H1 (cell line): ENCODE measurements at regions of chr2 and their contacts with region 1.

Region 1: GRCh38 chr2:33033606-33034081 is 86.9 kb downstream of the LTBP1 start:
- DNase-seq: no peak
- H3K4me3 ChIP-seq: no peak overlapping the region
- H3K27ac ChIP-seq: no peak overlapping the region
- H3K4me1 ChIP-seq: no peaks in the 10 kb centered on the region
- H3K27me3 ChIP-seq: no peaks in the 10 kb centered on the region
- CTCF ChIP-seq: peak in 1 of 3 experiments; percentile 25; a peak in 1 of 4 replicates
- EP300 ChIP-seq: no peak
- POLR2A ChIP-seq: no peak
- RAD21 ChIP-seq: peak; percentile 45 to 47

Region 2: GRCh38 chr2:32772638-32773447 is 260.8 kb before region 1 on chr2:
- CTCF ChIA-PET with region 1: interaction called, 10 read pairs
- POLR2A ChIA-PET with region 1: no interaction called
- DNase-seq: peak; percentile 5 to 48
- H3K4me3 ChIP-seq: no peak overlapping the region
- H3K27ac ChIP-seq: no peak overlapping the region
- H3K4me1 ChIP-seq: peaks cover 0 to 9% (median 3%) of the 10 kb centered on the region in 4 experiments; a peak in 2 of 7 replicates
- H3K27me3 ChIP-seq: no peaks in the 10 kb centered on the region
- CTCF ChIP-seq: peak in 2 of 3 experiments; percentile 66; a peak in 3 of 4 replicates
- EP300 ChIP-seq: no peak
- POLR2A ChIP-seq: no peak
- RAD21 ChIP-seq: peak; percentile 97

Region 3: DNA sequence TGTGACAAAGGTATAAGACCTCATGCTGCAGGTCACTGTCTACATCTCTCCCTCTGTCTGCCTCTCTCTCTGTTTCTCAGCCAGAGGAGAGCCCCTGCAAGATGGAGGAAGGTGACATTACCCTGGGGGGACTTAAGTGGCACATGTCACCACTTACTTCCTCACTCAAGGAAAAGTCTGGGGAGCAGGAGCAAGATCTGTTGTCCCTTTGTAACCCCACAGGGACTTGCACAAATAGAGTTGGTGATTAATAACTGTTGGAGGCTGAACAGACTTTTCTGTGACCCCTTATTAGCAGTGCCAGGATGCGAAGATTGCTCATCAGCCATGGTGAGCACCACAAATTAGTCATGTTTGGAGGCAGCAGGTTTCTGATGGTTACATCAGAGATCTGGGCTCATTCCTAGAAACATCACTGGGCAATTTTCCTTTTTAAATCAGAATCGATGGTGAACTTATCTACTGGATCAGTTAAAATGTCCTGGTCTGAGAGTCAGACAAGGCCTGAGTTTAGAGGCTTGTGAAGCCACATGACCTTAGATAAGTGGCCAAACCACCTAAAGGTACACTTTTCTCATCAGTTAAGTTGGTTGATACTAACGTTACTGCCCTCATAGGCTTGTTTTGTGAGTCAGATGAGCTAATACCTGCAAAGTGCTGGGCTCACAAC is 168.1 kb before region 1 on chr2:
- CTCF ChIA-PET with region 1: no interaction called
- POLR2A ChIA-PET with region 1: no interaction called
- DNase-seq: no peak
- H3K4me3 ChIP-seq: no peak overlapping the region
- H3K27ac ChIP-seq: no peak overlapping the region
- H3K4me1 ChIP-seq: no peaks in the 10 kb centered on the region
- H3K27me3 ChIP-seq: no peaks in the 10 kb centered on the region
- CTCF ChIP-seq: no peak
- EP300 ChIP-seq: no peak
- POLR2A ChIP-seq: no peak
- RAD21 ChIP-seq: no peak

Region 4: DNA sequence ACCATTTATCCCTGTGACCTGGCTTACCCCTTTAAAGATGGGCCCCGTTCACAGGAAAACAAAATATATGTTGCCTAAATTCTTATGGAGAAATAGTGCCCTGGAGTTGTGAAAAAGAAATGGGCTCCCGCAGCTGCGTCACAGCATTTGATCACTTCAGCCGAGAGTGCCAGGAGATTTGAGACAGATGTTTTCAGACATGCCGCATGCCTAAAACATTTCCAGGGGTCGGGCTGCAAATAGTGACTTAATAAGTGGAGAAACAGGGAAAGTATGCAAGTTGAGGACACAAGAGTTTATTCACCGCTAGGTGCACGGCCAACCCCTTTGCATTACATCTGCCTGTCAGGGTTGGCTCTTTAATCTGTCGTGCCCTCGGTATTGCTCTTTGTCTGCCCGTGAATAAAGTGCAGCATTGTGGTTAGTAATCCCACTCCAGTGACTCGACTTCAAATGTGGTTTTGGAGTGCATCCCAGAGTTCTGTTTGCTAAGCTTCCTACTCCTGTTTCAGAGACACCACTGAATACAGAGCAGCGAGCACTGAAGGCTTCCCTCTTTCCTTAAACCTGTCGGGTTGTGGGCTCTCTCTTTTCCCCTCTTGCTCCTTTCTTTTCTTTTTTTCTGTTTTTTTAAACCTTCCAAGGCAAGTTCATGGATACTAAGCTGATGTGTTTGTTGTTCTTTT is 100.6 kb after region 1 on chr2:
- CTCF ChIA-PET with region 1: no interaction called
- POLR2A ChIA-PET with region 1: no interaction called
- DNase-seq: no peak
- H3K4me3 ChIP-seq: no peak overlapping the region
- H3K27ac ChIP-seq: no peak overlapping the region
- H3K4me1 ChIP-seq: peaks cover 0 to 7% (median 4%) of the 10 kb centered on the region in 4 experiments; a peak in 2 of 7 replicates
- H3K27me3 ChIP-seq: no peaks in the 10 kb centered on the region
- CTCF ChIP-seq: no peak
- EP300 ChIP-seq: no peak
- POLR2A ChIP-seq: no peak
- RAD21 ChIP-seq: no peak

Region 5: GRCh38 chr2:33765122-33765521 is 731.5 kb after region 1 on chr2:
- CTCF ChIA-PET with region 1: no interaction called
- POLR2A ChIA-PET with region 1: no interaction called
- DNase-seq: no peak
- H3K4me3 ChIP-seq: no peak overlapping the region
- H3K27ac ChIP-seq: no peak overlapping the region
- H3K4me1 ChIP-seq: peaks cover 0 to 9% (median 0%) of the 10 kb centered on the region in 4 experiments; a peak in 2 of 7 replicates
- H3K27me3 ChIP-seq: no peaks in the 10 kb centered on the region
- CTCF ChIP-seq: peak in 2 of 3 experiments; percentile 4 to 15; a peak in 1 of 4 replicates
- EP300 ChIP-seq: no peak
- POLR2A ChIP-seq: no peak
- RAD21 ChIP-seq: peak; percentile 38 to 47; a peak in 3 of 4 replicates